K562 (cell line): ENCODE measurements at regions of chr2 and their contacts with region 1.

Region 1: GRCh38 chr2:191811807-191812602 is 34.9 kb downstream of the CAVIN2 start:
- DNase-seq: peak; percentile 31 to 70 (median 43)
- ATAC-seq: peak; percentile 94
- H3K4me3 ChIP-seq: no peak overlapping the region
- H3K27ac ChIP-seq: no peak overlapping the region
- H3K4me1 ChIP-seq: no peaks in the 10 kb centered on the region; a peak in 2 of 5 replicates
- H3K27me3 ChIP-seq: no peaks in the 10 kb centered on the region
- CTCF ChIP-seq: peak; percentile 65 to 82 (median 70)
- EP300 ChIP-seq: no peak
- POLR2A ChIP-seq: no peak
- RAD21 ChIP-seq: peak; percentile 89 to 92

Region 2: GRCh38 chr2:191555092-191555742 is 256.8 kb before region 1 on chr2:
- CTCF ChIA-PET with region 1: interaction called, 7 read pairs
- POLR2A ChIA-PET with region 1: interaction called, 3 read pairs
- in situ Hi-C with region 1: loop called (anchors 10 kb)
- intact Hi-C with region 1: loop called (anchors 2 kb)
- DNase-seq: peak; percentile 63 to 87 (median 73)
- ATAC-seq: peak; percentile 90
- H3K4me3 ChIP-seq: no peak overlapping the region
- H3K27ac ChIP-seq: no peak overlapping the region
- H3K4me1 ChIP-seq: peaks cover 4 to 15% of the 10 kb centered on the region in 2 experiments; a peak in 3 of 5 replicates
- H3K27me3 ChIP-seq: no peaks in the 10 kb centered on the region
- CTCF ChIP-seq: peak; percentile 66 to 76 (median 72)
- EP300 ChIP-seq: no peak
- POLR2A ChIP-seq: no peak
- RAD21 ChIP-seq: peak; percentile 83 to 84

Region 3: DNA sequence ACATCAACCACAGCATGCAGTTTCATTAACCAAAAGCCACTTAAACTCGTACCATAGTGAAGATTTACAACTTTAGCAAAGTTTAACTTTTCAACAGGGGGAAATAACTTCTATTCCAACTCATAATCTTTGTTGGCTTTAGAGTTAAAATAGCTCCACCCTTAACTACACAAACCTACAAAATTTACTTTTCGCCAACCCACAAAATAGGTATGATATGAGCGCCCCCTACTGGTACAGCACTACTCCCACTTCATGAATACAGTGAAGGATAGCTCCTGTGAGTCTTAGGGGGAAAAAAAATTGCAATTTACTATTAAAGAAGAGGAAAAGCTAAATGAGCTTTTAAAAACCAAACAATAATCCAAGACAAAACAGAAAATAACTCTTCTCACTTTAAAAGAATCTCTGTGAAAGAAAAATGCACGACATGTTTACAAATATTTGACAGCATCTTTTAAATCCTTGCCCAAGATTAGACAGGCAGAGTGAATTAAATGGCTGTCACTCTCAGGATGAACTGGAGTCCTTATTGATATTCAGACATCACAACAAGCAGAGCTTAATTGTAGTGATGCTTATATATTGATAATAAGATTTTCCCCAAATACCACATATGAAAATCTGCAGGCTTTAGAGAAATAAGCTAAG is 350.5 kb after region 1 on chr2:
- CTCF ChIA-PET with region 1: interaction called, 21 read pairs
- POLR2A ChIA-PET with region 1: interaction called, 9 read pairs
- in situ Hi-C with region 1: loop called (anchors 5 kb)
- intact Hi-C with region 1: loop called (anchors 1 kb)
- DNase-seq: peak; percentile 26 to 78 (median 37)
- ATAC-seq: peak; percentile 93
- H3K4me3 ChIP-seq: no peak overlapping the region
- H3K27ac ChIP-seq: no peak overlapping the region
- H3K4me1 ChIP-seq: no peaks in the 10 kb centered on the region
- H3K27me3 ChIP-seq: no peaks in the 10 kb centered on the region
- CTCF ChIP-seq: peak; percentile 66 to 79 (median 67)
- EP300 ChIP-seq: no peak
- POLR2A ChIP-seq: no peak
- RAD21 ChIP-seq: peak; percentile 91 to 92

Region 4: DNA sequence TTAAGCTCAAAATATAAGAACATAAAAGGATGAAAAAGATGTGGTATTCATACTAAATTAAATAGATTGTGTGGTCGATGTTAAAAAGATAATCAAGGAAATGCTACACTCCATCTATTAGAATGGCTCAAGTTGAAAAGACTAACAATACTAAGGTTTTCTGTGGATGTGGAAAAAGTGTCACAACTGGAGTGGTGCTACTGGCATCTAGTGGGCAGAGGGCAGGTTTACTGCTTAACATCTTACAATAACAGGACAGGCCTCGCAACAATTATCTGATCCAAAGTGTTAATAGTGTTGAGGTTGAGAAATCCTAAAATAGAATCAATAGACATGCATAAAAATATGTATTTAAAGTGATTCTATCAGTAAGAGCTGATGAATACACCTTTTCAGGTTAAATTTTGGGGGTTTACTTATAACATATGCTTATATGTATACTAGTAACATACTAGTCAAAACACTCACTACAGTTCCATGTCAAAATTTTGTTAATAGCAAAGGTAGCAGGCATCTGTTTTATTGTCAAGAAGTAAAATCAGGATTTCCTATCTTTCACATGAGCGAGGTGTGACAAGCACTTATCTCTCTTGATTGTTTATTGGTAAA is 474.2 kb after region 1 on chr2:
- CTCF ChIA-PET with region 1: no interaction called
- POLR2A ChIA-PET with region 1: no interaction called
- in situ Hi-C with region 1: no loop called
- intact Hi-C with region 1: loop called (anchors 5 kb)
- DNase-seq: peak in 1 of 4 experiments; percentile 8
- ATAC-seq: no peak
- H3K4me3 ChIP-seq: no peak overlapping the region
- H3K27ac ChIP-seq: no peak overlapping the region
- H3K4me1 ChIP-seq: no peaks in the 10 kb centered on the region
- H3K27me3 ChIP-seq: no peaks in the 10 kb centered on the region
- CTCF ChIP-seq: 0 out of 6 replicates have a peak, but pooled peaks of 1 of the 3 experiments have one; percentile 4
- EP300 ChIP-seq: no peak
- POLR2A ChIP-seq: no peak
- RAD21 ChIP-seq: peak; percentile 23 to 45; a peak in 3 of 4 replicates

Region 5: GRCh38 chr2:192414794-192415193 is 602.8 kb after region 1 on chr2:
- CTCF ChIA-PET with region 1: no interaction called
- POLR2A ChIA-PET with region 1: no interaction called
- in situ Hi-C with region 1: no loop called
- intact Hi-C with region 1: no loop called
- DNase-seq: no peak
- ATAC-seq: no peak
- H3K4me3 ChIP-seq: no peak overlapping the region
- H3K27ac ChIP-seq: no peak overlapping the region
- H3K4me1 ChIP-seq: no peaks in the 10 kb centered on the region
- H3K27me3 ChIP-seq: no peaks in the 10 kb centered on the region
- CTCF ChIP-seq: no peak
- EP300 ChIP-seq: no peak
- POLR2A ChIP-seq: no peak
- RAD21 ChIP-seq: no peak